Activated CD4-positive, alpha-beta memory T cell treated with anti-CD3 and anti-CD28 coated beads for 36 hours (primary cell): ENCODE measurements at regions of chr14 and their contacts with region 1.

Region 1: GRCh38 chr14:67943947-67944346 is 124.4 kb downstream of the RAD51B start:
- DNase-seq: peak; percentile 14
- H3K4me3 Mint-ChIP-seq: no peak overlapping the region
- H3K27ac Mint-ChIP-seq: no peak overlapping the region
- H3K4me1 Mint-ChIP-seq: no peaks in the 10 kb centered on the region
- H3K27me3 Mint-ChIP-seq: no peaks in the 10 kb centered on the region

Region 2: GRCh38 chr14:68248481-68249255 is 304.7 kb after region 1 on chr14:
- CTCF ChIA-PET with region 1: interaction called, 8 read pairs
- POLR2A ChIA-PET with region 1: no interaction called
- intact Hi-C with region 1: loop called (anchors 5 kb)
- DNase-seq: no peak
- H3K4me3 Mint-ChIP-seq: no peak overlapping the region
- H3K27ac Mint-ChIP-seq: no peak overlapping the region
- H3K4me1 Mint-ChIP-seq: peaks cover 36% of the 10 kb centered on the region
- H3K27me3 Mint-ChIP-seq: no peaks in the 10 kb centered on the region